Heart left ventricle (tissue), 16 donors: ENCODE measurements at regions of chr17 and their contacts with region 1.

Region 1: DNA sequence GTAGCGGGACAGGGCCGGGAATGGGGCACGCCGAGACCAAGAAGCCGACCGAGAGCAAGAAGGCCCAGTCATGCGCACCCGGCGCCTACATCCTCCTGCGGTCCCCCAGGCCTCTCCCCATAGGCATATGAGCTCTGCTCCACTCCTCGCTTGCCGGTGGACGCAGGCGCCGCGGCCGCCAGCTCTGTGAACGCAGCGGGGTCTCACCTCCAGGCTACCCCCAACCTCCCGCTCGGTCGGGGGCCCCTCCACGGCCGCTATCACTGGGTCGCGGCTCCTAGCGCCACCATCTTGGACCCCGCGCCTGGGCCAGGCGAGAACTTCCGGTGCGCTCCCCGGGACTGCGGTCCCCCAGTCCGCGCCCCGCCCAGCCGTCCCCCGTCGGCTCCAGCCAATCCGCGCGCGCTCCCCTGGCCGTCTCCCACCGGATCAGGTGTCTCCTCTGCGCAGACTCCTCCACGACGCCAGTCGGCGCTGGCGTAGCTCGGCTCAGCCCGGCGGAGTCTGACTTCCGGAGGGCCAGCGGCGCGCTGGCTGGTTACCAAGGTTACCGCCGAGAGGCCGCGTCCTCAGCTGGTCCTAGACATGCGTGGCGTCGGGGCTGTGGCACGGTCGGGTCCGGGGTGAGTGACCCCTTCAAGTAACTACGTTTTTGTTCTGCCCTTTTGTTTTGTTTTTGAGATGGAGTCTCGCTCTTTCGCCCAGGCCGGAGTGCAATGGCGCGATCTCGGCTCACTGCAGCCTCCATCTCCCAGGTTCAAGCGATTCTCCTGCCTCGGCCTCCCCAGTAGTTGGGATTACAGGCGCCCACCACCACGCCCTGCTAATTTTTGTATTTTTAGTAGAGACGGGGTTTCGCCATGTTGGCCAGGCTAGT is at the start of gene ZNF594:
- DNase-seq: peak; percentile 96 to 99 (median 98)
- ATAC-seq: peak; percentile 98 to 100 (median 100)
- H3K4me3 ChIP-seq: peak within 1 kb of the TSS; percentile 65 to 100 (median 87)
- H3K27ac ChIP-seq: peak within 1 kb of the TSS; percentile 46 to 90 (median 82)
- H3K4me1 ChIP-seq: peaks cover 0 to 24% (median 15%) of the 10 kb centered on the region in 12 donors
- H3K27me3 ChIP-seq: no peaks in the 10 kb centered on the region
- CTCF ChIP-seq: peak; percentile 51 to 96 (median 71)
- POLR2A ChIP-seq: peak; percentile 30 to 73
- total RNA-seq, gene ZNF594: 3.5 to 9.3 (median 7.2) TPM

Region 2: DNA sequence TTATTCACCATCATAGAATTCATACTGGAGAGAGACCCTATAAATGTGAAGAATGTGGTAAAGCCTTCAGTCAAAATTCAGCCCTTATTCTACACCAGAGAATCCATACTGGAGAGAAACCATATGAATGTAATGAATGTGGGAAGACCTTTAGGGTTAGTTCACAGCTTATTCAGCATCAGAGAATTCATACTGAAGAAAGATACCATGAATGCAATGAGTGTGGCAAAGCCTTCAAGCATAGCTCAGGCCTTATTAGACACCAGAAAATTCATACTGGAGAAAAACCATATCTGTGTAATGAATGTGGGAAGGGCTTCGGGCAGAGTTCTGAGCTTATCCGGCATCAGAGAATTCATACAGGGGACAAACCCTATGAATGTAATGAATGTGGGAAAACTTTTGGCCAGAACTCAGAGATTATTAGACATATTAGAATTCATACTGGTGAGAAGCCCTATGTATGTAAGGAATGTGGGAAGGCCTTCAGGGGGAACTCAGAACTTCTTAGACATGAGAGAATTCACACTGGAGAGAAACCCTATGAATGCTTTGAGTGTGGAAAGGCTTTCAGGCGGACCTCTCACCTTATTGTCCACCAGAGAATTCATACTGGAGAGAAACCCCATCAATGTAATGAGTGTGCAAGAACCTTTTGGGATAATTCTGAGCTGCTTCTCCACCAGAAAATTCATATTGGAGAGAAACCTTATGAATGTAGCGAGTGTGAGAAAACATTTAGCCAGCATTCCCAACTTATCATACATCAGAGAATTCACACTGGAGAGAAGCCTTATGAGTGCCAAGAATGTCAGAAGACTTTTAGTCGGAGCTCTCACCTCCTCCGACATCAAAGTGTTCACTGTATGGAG is 99.4 kb before region 1 on chr17:
- intact Hi-C with region 1: no loop called
- DNase-seq: no peak
- ATAC-seq: no peak
- H3K4me3 ChIP-seq: no peak overlapping the region
- H3K27ac ChIP-seq: no peak overlapping the region
- H3K4me1 ChIP-seq: peaks cover 0 to 7% (median 5%) of the 10 kb centered on the region in 12 donors
- H3K27me3 ChIP-seq: peaks cover 0 to 6% (median 0%) of the 10 kb centered on the region in 9 donors
- CTCF ChIP-seq: no peak
- POLR2A ChIP-seq: no peak

Region 3: DNA sequence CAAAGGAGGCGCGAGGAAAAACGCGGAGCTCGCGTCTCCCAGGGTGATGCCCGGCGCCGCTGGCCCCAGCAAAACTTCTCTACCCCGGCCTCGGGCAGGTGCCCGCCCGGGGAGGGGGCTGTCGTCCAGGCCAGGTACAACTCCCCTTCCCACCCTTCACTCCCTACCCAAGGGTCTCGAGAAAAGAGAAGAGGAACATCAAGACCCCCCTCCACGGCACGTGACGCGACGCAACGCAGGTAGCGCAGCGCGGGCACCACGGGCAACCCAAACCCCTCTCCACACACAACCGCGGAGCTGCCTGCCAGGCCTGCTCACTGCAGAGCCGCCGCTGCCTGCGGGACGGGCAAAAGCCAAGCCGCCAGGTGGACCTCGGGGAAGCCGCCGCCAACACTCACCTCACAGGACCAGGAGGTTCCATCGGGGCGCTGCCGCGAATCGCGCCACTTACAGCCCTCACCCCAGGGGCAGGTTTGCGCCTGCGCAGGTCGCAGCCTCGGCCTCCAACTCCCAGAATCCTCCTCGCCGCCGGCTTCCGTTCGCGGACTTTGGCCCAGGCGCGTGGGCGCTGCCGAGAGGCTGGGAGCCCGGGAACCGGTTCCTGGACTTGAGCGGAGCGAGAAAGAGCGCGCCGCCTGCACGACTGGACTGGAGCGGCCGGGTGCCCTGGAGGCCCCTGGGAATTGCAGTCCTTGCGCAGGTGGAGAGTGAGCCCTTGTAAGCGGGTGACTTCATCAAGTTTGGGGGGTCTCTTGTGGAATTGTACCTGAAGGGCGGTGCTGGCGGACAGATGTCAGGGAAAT is 80.2 kb before region 1 on chr17 and contains the start of gene ZNF232:
- intact Hi-C with region 1: loop called in 1 of 10 experiments (anchors 2 kb)
- DNase-seq: peak; percentile 93 to 98 (median 97)
- ATAC-seq: peak; percentile 92 to 98 (median 96)
- H3K4me3 ChIP-seq: peak within 1 kb of the TSS; percentile 63 to 98 (median 82)
- H3K27ac ChIP-seq: peak within 1 kb of the TSS in 11 of 12 donors; percentile 24 to 87 (median 76)
- H3K4me1 ChIP-seq: peaks cover 0 to 23% (median 12%) of the 10 kb centered on the region in 12 donors
- H3K27me3 ChIP-seq: peaks cover 0 to 21% (median 16%) of the 10 kb centered on the region in 9 donors
- CTCF ChIP-seq: peak in 3 of 12 donors; percentile 8 to 29 (median 10)
- POLR2A ChIP-seq: peak in 1 of 2 donors; percentile 62
- total RNA-seq, gene ZNF232: 2.2 to 6.5 (median 4.4) TPM

Region 4: GRCh38 chr17:5164436-5164835 is 27.3 kb before region 1 on chr17:
- intact Hi-C with region 1: no loop called
- DNase-seq: no peak
- ATAC-seq: no peak
- H3K4me3 ChIP-seq: no peak overlapping the region
- H3K27ac ChIP-seq: no peak overlapping the region
- H3K4me1 ChIP-seq: peaks cover 0 to 9% (median 0%) of the 10 kb centered on the region in 12 donors
- H3K27me3 ChIP-seq: peaks cover 0 to 4% (median 0%) of the 10 kb centered on the region in 9 donors
- CTCF ChIP-seq: no peak
- POLR2A ChIP-seq: no peak

Region 5: GRCh38 chr17:5281814-5282653 is 90.3 kb after region 1 on chr17 and contains the start of gene RABEP1:
- intact Hi-C with region 1: loop called in 1 of 10 experiments (anchors 10 kb)
- DNase-seq: peak; percentile 94 to 98 (median 95)
- ATAC-seq: peak; percentile 85 to 95 (median 94)
- H3K4me3 ChIP-seq: peak within 1 kb of the TSS; percentile 63 to 99 (median 83)
- H3K27ac ChIP-seq: peak within 1 kb of the TSS; percentile 87 to 97 (median 93)
- H3K4me1 ChIP-seq: peaks cover 0 to 40% (median 31%) of the 10 kb centered on the region in 12 donors
- H3K27me3 ChIP-seq: no peaks in the 10 kb centered on the region
- CTCF ChIP-seq: peak in 3 of 12 donors; percentile 12 to 31 (median 30)
- POLR2A ChIP-seq: peak; percentile 38 to 91
- total RNA-seq, gene RABEP1: 42.6 to 70.4 (median 54.1) TPM